K562 (cell line): ENCODE measurements at regions of chr6 and their contacts with region 1.

Region 1: DNA sequence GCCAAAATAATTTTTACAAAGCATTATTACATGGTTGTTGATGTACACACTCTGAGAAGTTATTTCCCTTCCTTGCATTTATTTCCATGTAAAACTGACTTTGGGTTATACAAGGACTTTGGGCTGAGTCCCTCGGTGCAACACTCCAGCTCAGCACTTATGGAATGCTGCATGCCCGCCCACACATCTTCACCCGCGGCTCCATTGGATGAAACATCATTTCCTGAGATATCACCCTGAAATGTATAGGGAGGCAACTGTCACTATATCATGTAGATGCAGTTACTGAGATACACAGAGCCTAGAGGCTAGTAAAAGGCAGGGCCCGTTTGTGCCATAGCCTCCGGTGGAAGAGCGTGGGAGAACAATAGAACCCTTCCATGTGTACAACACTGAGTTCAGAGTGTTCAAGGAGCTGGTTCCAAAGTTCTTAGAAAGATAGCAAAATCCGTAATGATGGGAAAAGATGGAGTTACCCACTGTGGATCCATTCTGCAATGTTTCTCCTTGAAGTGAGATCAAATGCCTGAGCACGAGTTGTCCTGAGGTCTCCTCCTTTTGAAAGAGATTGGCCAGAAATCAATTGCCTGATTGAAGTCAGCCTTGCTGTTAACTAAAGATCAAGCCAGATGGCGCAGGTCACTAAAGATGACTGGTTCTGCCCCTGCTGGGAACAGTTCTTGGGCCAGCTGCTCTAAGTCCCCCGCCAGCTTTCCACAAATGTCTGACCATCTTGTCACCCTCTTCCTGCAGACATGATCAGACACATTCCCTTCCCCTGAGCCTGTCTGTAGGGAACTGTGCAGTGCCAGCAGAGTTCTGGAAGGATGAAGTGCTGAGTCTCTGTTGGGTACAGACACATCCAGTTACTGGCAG is 100.9 kb upstream of the IYD start:
- DNase-seq: peak; percentile 58 to 89 (median 75)
- ATAC-seq: peak; percentile 63
- H3K4me3 ChIP-seq: no peak overlapping the region
- H3K27ac ChIP-seq: peak overlapping the region; percentile 67
- H3K4me1 ChIP-seq: peaks cover 39 to 59% of the 10 kb centered on the region in 2 experiments
- H3K27me3 ChIP-seq: no peaks in the 10 kb centered on the region
- CTCF ChIP-seq: peak; percentile 42 to 51 (median 46); a peak in 5 of 6 replicates
- EP300 ChIP-seq: peak; percentile 95
- POLR2A ChIP-seq: peak; percentile 71
- RAD21 ChIP-seq: peak; percentile 60 to 71

Region 2: DNA sequence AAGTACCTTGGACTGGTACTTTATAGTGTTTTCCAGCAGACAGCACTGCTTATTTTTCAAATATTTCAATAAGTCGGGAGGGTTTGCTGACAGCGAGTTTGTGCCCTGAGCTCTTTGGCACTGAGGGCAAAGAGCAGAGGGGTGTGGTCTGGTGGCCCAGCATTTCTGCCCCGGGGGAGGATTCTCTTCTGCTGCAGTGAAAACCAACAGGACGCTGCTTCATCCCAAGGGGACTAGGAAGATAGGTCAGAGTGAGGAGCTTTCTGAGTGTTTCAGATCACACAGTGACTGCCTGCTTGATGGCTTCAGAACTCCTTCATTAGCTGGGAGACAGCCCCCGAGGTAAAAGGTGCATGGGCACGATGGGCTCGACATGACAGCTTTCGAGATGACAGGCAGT is 317.5 kb before region 1 on chr6:
- CTCF ChIA-PET with region 1: no interaction called
- POLR2A ChIA-PET with region 1: no interaction called
- in situ Hi-C with region 1: no loop called
- intact Hi-C with region 1: no loop called
- DNase-seq: no peak
- ATAC-seq: no peak
- H3K4me3 ChIP-seq: no peak overlapping the region
- H3K27ac ChIP-seq: no peak overlapping the region
- H3K4me1 ChIP-seq: peaks cover 0 to 7% of the 10 kb centered on the region in 2 experiments; a peak in 1 of 5 replicates
- H3K27me3 ChIP-seq: peaks cover 11 to 38% of the 10 kb centered on the region in 2 experiments
- CTCF ChIP-seq: no peak
- EP300 ChIP-seq: no peak
- POLR2A ChIP-seq: no peak
- RAD21 ChIP-seq: no peak

Region 3: GRCh38 chr6:150079604-150080003 is 188.3 kb before region 1 on chr6:
- CTCF ChIA-PET with region 1: no interaction called
- POLR2A ChIA-PET with region 1: no interaction called
- in situ Hi-C with region 1: no loop called
- intact Hi-C with region 1: loop called (anchors 2 kb)
- DNase-seq: no peak
- ATAC-seq: peak; percentile 52
- H3K4me3 ChIP-seq: no peak overlapping the region
- H3K27ac ChIP-seq: no peak overlapping the region
- H3K4me1 ChIP-seq: no peaks in the 10 kb centered on the region; a peak in 2 of 5 replicates
- H3K27me3 ChIP-seq: peaks cover 18 to 20% of the 10 kb centered on the region in 2 experiments
- CTCF ChIP-seq: no peak
- EP300 ChIP-seq: no peak
- POLR2A ChIP-seq: no peak
- RAD21 ChIP-seq: no peak

Region 4: DNA sequence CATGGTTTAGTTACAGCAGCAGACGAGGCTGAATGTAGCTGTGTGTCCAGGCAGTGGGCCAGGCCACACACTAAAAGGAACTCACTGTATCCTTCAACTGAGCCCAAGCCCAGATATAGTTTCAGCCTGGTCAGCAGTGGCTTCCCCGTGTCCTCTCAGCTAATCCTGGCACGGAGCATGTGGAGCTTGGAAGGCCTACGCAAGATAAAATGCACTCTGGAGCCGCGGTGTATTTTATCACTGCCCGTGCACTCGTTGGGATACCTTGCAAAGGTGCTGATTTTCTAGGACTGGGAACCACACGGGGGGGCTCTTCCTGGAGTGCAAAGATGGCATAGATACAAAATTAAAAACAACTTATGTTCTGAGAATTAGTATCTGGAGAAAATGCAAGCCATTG is 52.5 kb after region 1 on chr6:
- CTCF ChIA-PET with region 1: no interaction called
- POLR2A ChIA-PET with region 1: interaction called, 4 read pairs
- in situ Hi-C with region 1: no loop called
- intact Hi-C with region 1: loop called (anchors 5 kb)
- DNase-seq: peak in 2 of 4 experiments; percentile 33 to 57
- ATAC-seq: peak; percentile 55
- H3K4me3 ChIP-seq: no peak overlapping the region
- H3K27ac ChIP-seq: no peak overlapping the region; the same call in 2 of the 3 replicates
- H3K4me1 ChIP-seq: peaks cover 10 to 38% of the 10 kb centered on the region in 2 experiments; a peak in 4 of 5 replicates
- H3K27me3 ChIP-seq: no peaks in the 10 kb centered on the region
- CTCF ChIP-seq: no peak; a peak in 1 of 6 replicates
- EP300 ChIP-seq: no peak
- POLR2A ChIP-seq: no peak
- RAD21 ChIP-seq: 0 out of 4 replicates have a peak, but pooled peaks of 1 of the 2 experiments have one; percentile 26